Endothelial cell of umbilical vein (primary cell): ENCODE measurements at regions of chr6 and their contacts with region 1.

Region 1: GRCh38 chr6:111427341-111428116 is 55.5 kb downstream of the REV3L start:
- DNase-seq: peak; percentile 90
- H3K4me3 ChIP-seq: peak overlapping the region in 2 of 3 experiments; percentile 16 to 23
- H3K27ac ChIP-seq: peak overlapping the region; percentile 93
- H3K4me1 ChIP-seq: peaks cover 48% of the 10 kb centered on the region
- H3K27me3 ChIP-seq: no peaks in the 10 kb centered on the region
- CTCF ChIP-seq: no peak
- POLR2A ChIP-seq: no peak

Region 2: GRCh38 chr6:111410371-111411094 is 17.0 kb before region 1 on chr6:
- CTCF ChIA-PET with region 1: interaction called, 10 read pairs
- POLR2A ChIA-PET with region 1: no interaction called
- dilution Hi-C with region 1: no loop called
- intact Hi-C with region 1: no loop called
- DNase-seq: no peak
- H3K4me3 ChIP-seq: no peak overlapping the region
- H3K27ac ChIP-seq: no peak overlapping the region
- H3K4me1 ChIP-seq: no peaks in the 10 kb centered on the region
- H3K27me3 ChIP-seq: no peaks in the 10 kb centered on the region
- CTCF ChIP-seq: no peak
- POLR2A ChIP-seq: no peak

Region 3: DNA sequence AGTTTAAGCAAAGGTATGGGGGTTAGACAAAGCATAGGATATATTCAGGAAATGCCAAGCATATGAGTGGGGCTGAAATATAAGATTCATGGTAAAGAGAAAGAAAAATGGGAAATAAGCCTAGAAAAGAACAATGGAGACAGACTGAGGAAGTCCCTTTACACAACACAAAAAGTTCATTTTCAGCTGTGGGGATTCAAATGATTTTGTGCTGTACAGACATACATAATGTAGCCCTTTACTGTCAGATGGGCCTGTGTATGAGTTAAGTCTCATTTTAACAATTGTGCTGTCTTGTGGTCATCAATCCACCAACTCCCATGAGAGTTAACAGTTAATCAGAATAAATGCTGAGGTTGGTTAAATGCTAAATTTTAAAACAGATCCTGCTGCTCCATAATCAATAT is 18.3 kb after region 1 on chr6:
- CTCF ChIA-PET with region 1: no interaction called
- POLR2A ChIA-PET with region 1: no interaction called
- dilution Hi-C with region 1: no loop called
- intact Hi-C with region 1: loop called (anchors 1 kb)
- DNase-seq: peak; percentile 76
- H3K4me3 ChIP-seq: peak overlapping the region in 1 of 3 experiments; percentile 27
- H3K27ac ChIP-seq: peak overlapping the region; percentile 85
- H3K4me1 ChIP-seq: peaks cover 19% of the 10 kb centered on the region
- H3K27me3 ChIP-seq: no peaks in the 10 kb centered on the region
- CTCF ChIP-seq: no peak
- POLR2A ChIP-seq: no peak

Region 4: GRCh38 chr6:111462770-111463391 is 35.4 kb after region 1 on chr6:
- CTCF ChIA-PET with region 1: no interaction called
- POLR2A ChIA-PET with region 1: no interaction called
- dilution Hi-C with region 1: no loop called
- intact Hi-C with region 1: loop called (anchors 2 kb)
- DNase-seq: peak; percentile 90
- H3K4me3 ChIP-seq: no peak overlapping the region
- H3K27ac ChIP-seq: peak overlapping the region; percentile 3
- H3K4me1 ChIP-seq: peaks cover 29% of the 10 kb centered on the region
- H3K27me3 ChIP-seq: no peaks in the 10 kb centered on the region
- CTCF ChIP-seq: no peak
- POLR2A ChIP-seq: no peak

Region 5: DNA sequence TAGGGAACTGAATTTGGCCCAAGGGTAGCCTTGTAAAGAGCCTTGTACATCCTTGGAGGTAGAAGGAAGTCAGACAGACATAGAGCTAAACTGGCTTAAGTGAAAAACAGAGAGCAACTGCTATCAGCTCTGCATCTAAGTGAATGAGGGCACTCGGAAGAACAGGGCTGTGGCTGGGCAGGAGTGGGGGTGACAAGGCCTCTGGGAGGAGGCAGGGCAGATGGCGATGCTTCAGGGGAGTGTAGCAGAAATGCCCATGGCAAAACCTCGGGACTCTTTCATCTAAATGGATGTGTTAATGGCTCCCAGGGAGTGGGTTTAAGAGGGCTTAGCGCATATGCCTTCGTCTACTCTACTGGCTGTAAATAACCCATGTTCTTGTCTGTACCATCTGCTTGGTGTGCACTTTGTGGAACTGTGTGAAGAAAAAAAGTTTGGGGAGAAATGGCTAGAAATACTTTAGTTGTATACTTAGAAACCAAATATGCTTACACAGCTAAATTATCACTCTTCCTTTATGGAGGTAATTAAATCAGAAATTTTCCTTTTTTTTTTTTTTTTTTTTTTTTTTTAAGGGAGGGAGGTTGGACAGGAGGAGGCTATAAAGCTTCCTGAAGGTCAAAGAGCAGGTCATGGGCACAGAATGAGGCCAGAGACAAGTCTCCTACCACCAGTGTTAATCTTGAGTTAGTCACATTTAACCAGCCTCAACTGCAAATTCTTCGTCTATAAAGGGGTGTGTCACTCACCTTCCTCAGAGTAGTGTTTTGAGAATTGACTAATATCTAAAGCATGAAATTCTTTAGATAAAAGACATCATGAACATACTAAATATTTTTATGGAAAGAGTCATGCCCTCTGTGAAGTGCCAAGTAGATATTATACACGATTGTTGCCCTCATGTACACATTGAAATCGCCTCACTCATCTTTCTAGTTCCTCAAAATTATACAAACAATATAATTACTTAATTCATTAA is 384.8 kb after region 1 on chr6:
- CTCF ChIA-PET with region 1: no interaction called
- POLR2A ChIA-PET with region 1: no interaction called
- dilution Hi-C with region 1: no loop called
- intact Hi-C with region 1: no loop called
- DNase-seq: no peak
- H3K4me3 ChIP-seq: no peak overlapping the region
- H3K27ac ChIP-seq: no peak overlapping the region
- H3K4me1 ChIP-seq: peaks cover 8% of the 10 kb centered on the region
- H3K27me3 ChIP-seq: no peaks in the 10 kb centered on the region
- CTCF ChIP-seq: no peak
- POLR2A ChIP-seq: no peak